ENCODE measurements at regions of chr22 and their contacts with region 1.

Region 1: GRCh38 chr22:22327723-22328122 is 83.1 kb downstream of the VPREB1 start:
- DNase-seq: no peak
- H3K4me3 Mint-ChIP-seq: no peak overlapping the region
- H3K27ac Mint-ChIP-seq: no peak overlapping the region
- H3K4me1 Mint-ChIP-seq: peaks cover 5% of the 10 kb centered on the region
- H3K27me3 Mint-ChIP-seq: peaks cover 29% of the 10 kb centered on the region

Region 2: DNA sequence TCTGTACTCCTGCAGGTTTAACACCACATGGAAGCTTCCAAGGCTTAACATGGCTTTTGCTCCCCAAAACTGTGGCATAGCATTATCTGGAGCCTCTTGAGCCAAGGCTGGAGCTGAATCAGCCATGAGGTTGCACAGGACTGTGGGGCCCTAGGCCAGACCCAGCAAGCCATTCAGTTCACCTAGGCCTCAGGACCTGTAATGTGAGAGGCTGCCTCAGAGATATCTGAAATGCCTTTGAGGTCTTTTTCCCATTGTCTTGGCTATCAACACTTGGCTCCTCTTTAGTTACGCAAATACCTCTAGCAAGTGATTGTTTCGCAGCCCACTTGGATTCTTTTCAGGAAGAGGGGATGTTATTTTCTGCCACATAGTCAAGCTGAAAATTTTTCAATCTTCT is 11.1 kb before region 1 on chr22:
- CTCF ChIA-PET with region 1: no interaction called
- DNase-seq: no peak
- H3K4me3 Mint-ChIP-seq: no peak overlapping the region
- H3K27ac Mint-ChIP-seq: no peak overlapping the region
- H3K4me1 Mint-ChIP-seq: no peaks in the 10 kb centered on the region
- H3K27me3 Mint-ChIP-seq: no peaks in the 10 kb centered on the region

Region 3: GRCh38 chr22:22342697-22343580 is 15.2 kb after region 1 on chr22:
- CTCF ChIA-PET with region 1: interaction called, 13 read pairs
- DNase-seq: peak; percentile 78
- H3K4me3 Mint-ChIP-seq: no peak overlapping the region
- H3K27ac Mint-ChIP-seq: no peak overlapping the region
- H3K4me1 Mint-ChIP-seq: peaks cover 6% of the 10 kb centered on the region
- H3K27me3 Mint-ChIP-seq: peaks cover 35% of the 10 kb centered on the region

Region 4: GRCh38 chr22:22616636-22617035 is 288.9 kb after region 1 on chr22:
- CTCF ChIA-PET with region 1: no interaction called
- DNase-seq: no peak
- H3K4me3 Mint-ChIP-seq: no peak overlapping the region
- H3K27ac Mint-ChIP-seq: no peak overlapping the region
- H3K4me1 Mint-ChIP-seq: peaks cover 10% of the 10 kb centered on the region
- H3K27me3 Mint-ChIP-seq: peaks cover 42% of the 10 kb centered on the region

Measured in activated naive CD4-positive, alpha-beta T cell treated with anti-CD3 and anti-CD28 coated beads, Interleukin-2, amount 10 ng/mL, durations not matched to agents 7 days and 5 days (primary cell).